Activated B cell treated with CpG ODN at 0.5 μM for 24 hours (primary cell): ENCODE measurements at regions of chr3 and their contacts with region 1.

Region 1: DNA sequence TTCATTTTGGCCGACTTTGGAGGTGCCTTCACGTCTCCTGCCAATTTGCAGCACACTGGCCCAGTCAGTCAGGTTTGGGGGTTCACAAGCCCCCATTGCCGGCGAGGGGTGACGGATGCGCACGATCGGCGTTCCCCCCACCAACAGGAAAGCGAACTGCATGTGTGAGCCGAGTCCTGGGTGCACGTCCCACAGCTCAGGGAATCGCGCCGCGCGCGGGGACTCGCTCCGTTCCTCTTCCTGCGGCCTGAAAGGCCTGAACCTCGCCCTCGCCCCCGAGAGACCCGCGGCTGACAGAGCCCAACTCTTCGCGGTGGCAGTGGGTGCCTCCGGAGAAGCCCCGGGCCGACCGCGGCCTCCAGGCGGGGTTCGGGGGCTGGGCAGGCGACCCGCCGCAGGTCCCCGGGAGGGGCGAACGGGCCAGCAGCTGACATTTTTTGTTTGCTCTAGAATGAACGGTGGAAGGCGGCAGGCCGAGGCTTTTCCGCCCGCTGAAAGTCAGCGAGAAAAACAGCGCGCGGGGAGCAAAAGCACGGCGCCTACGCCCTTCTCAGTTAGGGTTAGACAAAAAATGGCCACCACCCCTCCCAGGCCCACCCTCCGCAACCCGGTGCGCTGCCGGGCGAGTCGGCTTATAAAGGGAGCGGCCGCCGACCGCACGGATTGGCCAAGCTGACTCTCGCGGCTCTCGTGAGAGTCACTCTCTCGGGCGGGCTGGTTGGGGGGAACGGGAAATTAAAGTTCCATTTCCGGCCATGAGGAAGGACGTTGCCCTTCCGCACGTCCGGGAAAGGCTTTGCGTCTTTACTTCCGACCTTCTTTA is at the start of gene TERC:
- DNase-seq: peak; percentile 78
- ATAC-seq: peak; percentile 79
- H3K4me3 Mint-ChIP-seq: peak within 1 kb of the TSS; percentile 96
- H3K27ac Mint-ChIP-seq: peak within 1 kb of the TSS; percentile 99
- H3K4me1 Mint-ChIP-seq: peaks cover 25% of the 10 kb centered on the region
- H3K27me3 Mint-ChIP-seq: no peaks in the 10 kb centered on the region
- CTCF ChIP-seq: no peak
- total RNA-seq, gene TERC: 2.5 and 8.4 TPM in 2 replicates

Region 2: DNA sequence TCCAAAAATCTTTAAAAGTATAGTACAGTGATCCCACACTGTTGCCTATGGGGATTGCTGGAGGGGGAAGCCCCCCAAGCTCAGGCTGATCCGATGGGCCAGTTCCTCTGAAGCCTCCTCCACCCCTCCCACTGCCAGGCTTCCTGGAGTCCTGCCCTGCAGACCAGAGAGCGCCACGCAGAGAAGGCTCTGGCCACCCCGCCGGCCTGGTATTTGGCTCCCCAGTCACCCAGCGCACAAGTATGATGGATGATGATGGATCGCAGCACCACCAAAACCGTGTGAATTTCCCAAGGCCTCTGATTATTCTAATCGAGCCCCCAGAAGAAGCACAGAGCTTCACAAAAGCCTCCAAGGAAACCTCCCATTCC is 360.2 kb before region 1 on chr3:
- CTCF ChIA-PET with region 1: no interaction called
- POLR2A ChIA-PET with region 1: no interaction called
- intact Hi-C with region 1: no loop called
- DNase-seq: no peak
- ATAC-seq: no peak
- H3K4me3 Mint-ChIP-seq: no peak overlapping the region
- H3K27ac Mint-ChIP-seq: no peak overlapping the region
- H3K4me1 Mint-ChIP-seq: no peaks in the 10 kb centered on the region
- H3K27me3 Mint-ChIP-seq: peaks cover 2% of the 10 kb centered on the region
- CTCF ChIP-seq: no peak

Region 3: GRCh38 chr3:169812332-169813235 is 47.9 kb after region 1 on chr3 and contains the starts of genes LRRC34 and LRRIQ4:
- CTCF ChIA-PET with region 1: interaction called, 3 read pairs
- POLR2A ChIA-PET with region 1: interaction called, 38 read pairs
- intact Hi-C with region 1: loop called (anchors 1 kb)
- DNase-seq: peak; percentile 70
- ATAC-seq: peak; percentile 56
- H3K4me3 Mint-ChIP-seq: peak within 1 kb of the TSS; percentile 85
- H3K27ac Mint-ChIP-seq: peak within 1 kb of the TSS; percentile 97
- H3K4me1 Mint-ChIP-seq: peaks cover 37% of the 10 kb centered on the region
- H3K27me3 Mint-ChIP-seq: no peaks in the 10 kb centered on the region
- CTCF ChIP-seq: no peak
- total RNA-seq, gene LRRC34: 4.2 and 5.7 TPM in 2 replicates
- total RNA-seq, gene LRRIQ4: 0.29 and 0.40 TPM in 2 replicates

Region 4: GRCh38 chr3:169966428-169966950 is 201.8 kb after region 1 on chr3 and contains the start of gene SEC62:
- CTCF ChIA-PET with region 1: interaction called, 3 read pairs
- POLR2A ChIA-PET with region 1: interaction called, 26 read pairs
- intact Hi-C with region 1: loop called (anchors 2 kb)
- DNase-seq: peak; percentile 94
- ATAC-seq: peak; percentile 86
- H3K4me3 Mint-ChIP-seq: peak within 1 kb of the TSS; percentile 99
- H3K27ac Mint-ChIP-seq: peak within 1 kb of the TSS; percentile 99
- H3K4me1 Mint-ChIP-seq: peaks cover 87% of the 10 kb centered on the region
- H3K27me3 Mint-ChIP-seq: no peaks in the 10 kb centered on the region
- CTCF ChIP-seq: no peak
- total RNA-seq, gene SEC62: 140 and 165 TPM in 2 replicates

Region 5: DNA sequence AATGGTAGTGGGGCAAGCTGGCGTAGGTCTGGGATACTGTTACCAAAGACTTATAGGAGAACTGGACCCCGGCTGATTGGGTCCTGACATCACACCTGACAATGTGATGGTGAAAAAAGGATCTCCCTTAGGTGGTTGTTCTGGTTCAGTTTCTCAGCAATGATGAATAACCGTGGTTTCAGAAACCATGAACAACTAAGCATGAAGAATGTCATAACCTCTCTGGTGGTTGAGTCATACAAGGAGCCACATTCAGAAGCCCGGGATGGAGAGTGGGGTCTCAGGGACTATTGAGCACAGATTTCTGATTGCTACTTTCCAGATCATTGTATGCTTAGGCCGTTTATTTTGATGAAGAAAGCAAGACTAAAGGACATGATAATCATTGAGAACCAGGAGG is 290.5 kb after region 1 on chr3:
- CTCF ChIA-PET with region 1: interaction called, 5 read pairs
- POLR2A ChIA-PET with region 1: interaction called, 11 read pairs
- intact Hi-C with region 1: loop called (anchors 1 kb)
- DNase-seq: no peak
- ATAC-seq: peak; percentile 75
- H3K4me3 Mint-ChIP-seq: peak overlapping the region; percentile 77
- H3K27ac Mint-ChIP-seq: peak overlapping the region; percentile 87
- H3K4me1 Mint-ChIP-seq: peaks cover 57% of the 10 kb centered on the region
- H3K27me3 Mint-ChIP-seq: no peaks in the 10 kb centered on the region
- CTCF ChIP-seq: no peak

Region 6: GRCh38 chr3:170414202-170414663 is 649.6 kb after region 1 on chr3:
- CTCF ChIA-PET with region 1: no interaction called
- POLR2A ChIA-PET with region 1: no interaction called
- intact Hi-C with region 1: loop called (anchors 2 kb)
- DNase-seq: no peak
- ATAC-seq: peak; percentile 72
- H3K4me3 Mint-ChIP-seq: no peak overlapping the region
- H3K27ac Mint-ChIP-seq: no peak overlapping the region
- H3K4me1 Mint-ChIP-seq: peaks cover 9% of the 10 kb centered on the region
- H3K27me3 Mint-ChIP-seq: peaks cover 15% of the 10 kb centered on the region
- CTCF ChIP-seq: peak; percentile 98

Region 7: DNA sequence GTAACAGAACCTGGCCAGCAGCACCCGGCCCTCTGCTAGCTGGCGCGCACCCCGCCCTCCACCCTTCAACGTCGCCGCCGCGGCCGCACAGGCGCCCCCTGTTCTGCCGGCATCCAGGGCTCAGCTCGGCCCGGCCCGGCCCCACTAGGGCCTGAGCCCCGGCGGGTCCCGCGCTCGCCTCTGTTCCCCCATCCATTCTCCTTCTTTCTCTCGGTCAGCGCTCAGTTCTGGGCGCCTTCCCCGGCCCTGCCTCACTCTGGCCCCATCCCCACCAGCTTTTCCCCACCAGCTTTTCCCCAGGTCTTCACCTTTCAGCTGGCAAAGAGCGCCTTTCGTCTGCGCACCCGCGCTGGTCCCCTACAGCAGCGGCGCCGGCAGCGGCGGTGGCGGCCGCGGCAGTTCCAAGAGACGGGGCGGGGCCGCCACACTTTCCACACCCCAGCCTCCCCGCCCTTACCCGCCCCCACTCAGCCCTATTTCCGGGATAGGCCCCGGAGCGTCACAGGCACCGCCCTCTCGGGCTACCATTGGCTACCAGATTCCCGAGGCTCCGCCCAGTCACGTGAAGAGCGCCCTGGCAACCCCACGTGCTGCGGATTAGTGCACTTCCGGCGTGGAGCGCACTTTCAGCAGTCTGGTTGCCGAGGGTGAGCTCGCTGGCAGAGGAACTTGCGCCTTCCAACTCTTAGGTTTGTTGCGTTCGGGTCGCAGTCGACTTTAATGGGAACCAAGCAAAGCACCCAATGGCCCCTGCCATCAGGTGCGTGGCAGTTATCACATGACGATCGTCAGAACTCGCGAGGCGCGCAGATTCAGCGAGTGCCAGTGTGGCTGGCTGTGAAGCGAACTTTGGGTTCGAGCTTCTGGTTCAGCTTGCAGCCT is 1143.8 kb after region 1 on chr3 and contains the start of gene EIF5A2:
- CTCF ChIA-PET with region 1: no interaction called
- POLR2A ChIA-PET with region 1: no interaction called
- intact Hi-C with region 1: loop called (anchors 1 kb)
- DNase-seq: peak; percentile 77
- ATAC-seq: peak; percentile 95
- H3K4me3 Mint-ChIP-seq: peak within 1 kb of the TSS; percentile 94
- H3K27ac Mint-ChIP-seq: peak within 1 kb of the TSS; percentile 86
- H3K4me1 Mint-ChIP-seq: peaks cover 18% of the 10 kb centered on the region
- H3K27me3 Mint-ChIP-seq: no peaks in the 10 kb centered on the region
- CTCF ChIP-seq: no peak
- total RNA-seq, gene EIF5A2: 6.1 and 6.9 TPM in 2 replicates